A673 (cell line): ENCODE measurements at regions of chr5 and their contacts with region 1.

Region 1: DNA sequence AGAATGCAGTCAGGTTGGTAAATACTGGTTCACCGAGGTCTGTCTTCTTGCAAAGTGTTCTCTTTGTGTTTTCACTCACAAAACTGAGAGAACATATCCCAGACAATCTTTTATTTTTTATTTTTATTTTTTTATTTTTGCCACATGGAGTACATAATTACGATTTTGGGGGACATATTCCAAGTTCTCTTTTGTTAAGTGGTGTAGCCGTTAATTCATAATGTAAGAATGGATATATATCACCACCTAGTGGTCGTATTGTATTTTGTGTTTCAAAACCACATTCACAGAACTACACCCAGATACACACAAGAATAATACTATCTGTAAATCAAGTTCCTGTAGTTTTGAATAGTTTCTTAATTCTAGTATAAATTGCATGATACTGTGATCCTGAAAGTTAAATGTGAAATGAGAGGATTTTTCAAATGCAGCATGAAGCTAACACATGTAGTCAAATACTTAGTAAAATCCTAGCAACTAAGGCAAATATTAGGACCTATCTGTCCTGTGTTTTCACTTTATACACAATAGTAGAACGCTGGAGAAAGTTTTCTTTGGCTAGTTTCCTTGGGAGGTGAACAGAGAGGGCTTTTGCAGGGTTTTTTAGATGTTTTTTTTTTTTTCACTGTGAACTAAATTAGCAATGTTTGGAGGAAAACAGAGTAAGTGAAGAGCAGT is 92.7 kb downstream of the VCAN start:
- DNase-seq: peak; percentile 52
- H3K4me3 ChIP-seq: no peak overlapping the region
- H3K27ac ChIP-seq: no peak overlapping the region
- H3K4me1 ChIP-seq: no peaks in the 10 kb centered on the region
- H3K27me3 ChIP-seq: peaks cover 4% of the 10 kb centered on the region
- CTCF ChIP-seq: peak; percentile 68

Region 2: GRCh38 chr5:82312373-82312856 is 1251.8 kb before region 1 on chr5:
- CTCF ChIA-PET with region 1: no interaction called
- POLR2A ChIA-PET with region 1: no interaction called
- intact Hi-C with region 1: loop called (anchors 2 kb)
- DNase-seq: peak; percentile 83
- H3K4me3 ChIP-seq: no peak overlapping the region
- H3K27ac ChIP-seq: no peak overlapping the region
- H3K4me1 ChIP-seq: peaks cover 7% of the 10 kb centered on the region
- H3K27me3 ChIP-seq: no peaks in the 10 kb centered on the region
- CTCF ChIP-seq: peak; percentile 96

Region 3: DNA sequence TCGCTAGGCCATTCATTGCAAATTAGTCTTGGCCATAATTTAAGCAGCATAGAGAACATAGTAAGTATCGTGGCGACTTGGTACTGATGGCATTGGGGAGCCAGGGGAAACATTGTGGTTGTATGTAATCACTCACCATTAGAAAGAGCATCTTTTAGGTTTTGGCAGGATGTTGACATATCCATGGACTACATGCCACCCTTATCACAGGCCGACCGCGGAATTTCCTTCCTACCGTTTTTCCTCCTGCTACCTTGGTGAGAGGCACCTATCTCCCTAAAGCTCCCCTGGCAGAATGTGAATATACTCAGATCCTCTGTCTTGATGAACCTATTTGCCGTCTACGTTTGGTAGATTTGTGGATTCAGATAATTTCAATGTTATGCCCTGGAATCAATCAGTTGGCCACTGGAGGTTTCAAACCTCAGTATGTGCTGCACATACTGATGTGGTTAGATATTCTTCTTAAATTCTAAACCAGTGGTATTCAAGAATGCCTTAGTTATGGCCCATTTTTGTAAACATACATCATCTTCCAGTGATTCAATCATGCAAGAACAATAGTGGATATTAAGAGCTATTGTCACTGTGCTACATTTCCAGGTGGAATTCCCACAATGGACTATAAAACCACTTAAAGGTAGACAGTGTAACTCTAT is 427.5 kb after region 1 on chr5:
- CTCF ChIA-PET with region 1: no interaction called
- POLR2A ChIA-PET with region 1: no interaction called
- intact Hi-C with region 1: no loop called
- DNase-seq: no peak
- H3K4me3 ChIP-seq: no peak overlapping the region
- H3K27ac ChIP-seq: no peak overlapping the region
- H3K4me1 ChIP-seq: no peaks in the 10 kb centered on the region
- H3K27me3 ChIP-seq: no peaks in the 10 kb centered on the region
- CTCF ChIP-seq: no peak